ENCODE measurements at regions of chrX and their contacts with region 1.

Region 1: DNA sequence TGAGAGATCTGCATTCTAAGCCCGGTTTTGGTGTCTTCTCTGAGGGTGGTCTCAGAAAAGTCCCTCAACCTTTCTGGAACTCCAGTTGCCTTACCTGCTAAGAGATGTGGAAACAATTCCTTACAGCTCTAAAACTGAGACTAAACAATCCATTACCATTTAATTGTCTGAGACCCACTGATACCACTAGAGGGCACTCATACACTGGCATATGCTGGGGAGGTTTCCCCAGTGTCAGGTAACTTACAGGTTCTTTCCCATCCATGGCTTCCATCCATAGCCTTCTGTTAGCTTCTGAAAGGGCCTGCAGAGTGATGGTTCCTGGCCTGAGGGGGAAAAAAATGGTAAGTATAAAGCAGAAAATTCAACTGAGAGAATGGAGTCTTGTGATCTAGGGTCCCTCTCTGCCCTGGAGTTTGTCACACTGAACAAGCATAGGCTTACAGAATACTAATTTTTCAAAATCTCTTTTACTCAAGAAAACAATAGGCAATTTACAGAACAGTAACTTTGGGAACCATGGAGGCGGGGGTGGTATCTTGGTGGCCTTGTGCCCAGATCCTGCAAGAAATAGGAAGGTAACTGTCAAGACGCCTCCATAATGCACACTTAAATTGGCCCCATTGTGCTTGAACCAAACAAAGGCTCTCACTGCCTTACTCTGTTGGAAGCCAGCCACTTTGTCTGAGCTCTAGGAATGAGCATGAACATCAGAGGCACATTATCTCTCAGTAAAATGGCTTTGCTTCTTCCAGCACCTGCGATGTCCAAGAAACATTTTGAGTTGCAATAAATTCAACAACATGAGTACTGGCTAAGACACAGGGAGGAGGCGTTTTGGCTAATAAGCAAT is 236.1 kb downstream of the OPHN1 start:
- DNase-seq: peak; percentile 37
- H3K4me3 ChIP-seq: no peak overlapping the region
- H3K27ac ChIP-seq: no peak overlapping the region
- H3K4me1 ChIP-seq: no peaks in the 10 kb centered on the region
- CTCF ChIP-seq: peak; percentile 76

Region 2: GRCh38 chrX:68462653-68463052 is 265.5 kb after region 1 on chrX:
- CTCF ChIA-PET with region 1: no interaction called
- POLR2A ChIA-PET with region 1: no interaction called
- intact Hi-C with region 1: loop called (anchors 5 kb)
- DNase-seq: peak; percentile 14
- H3K4me3 ChIP-seq: no peak overlapping the region
- H3K27ac ChIP-seq: no peak overlapping the region
- H3K4me1 ChIP-seq: no peaks in the 10 kb centered on the region
- CTCF ChIP-seq: peak; percentile 59

Region 3: GRCh38 chrX:68634654-68635232 is 437.6 kb after region 1 on chrX:
- CTCF ChIA-PET with region 1: no interaction called
- POLR2A ChIA-PET with region 1: no interaction called
- intact Hi-C with region 1: no loop called
- DNase-seq: no peak
- H3K4me3 ChIP-seq: no peak overlapping the region
- H3K27ac ChIP-seq: no peak overlapping the region
- H3K4me1 ChIP-seq: no peaks in the 10 kb centered on the region
- CTCF ChIP-seq: no peak

Region 4: DNA sequence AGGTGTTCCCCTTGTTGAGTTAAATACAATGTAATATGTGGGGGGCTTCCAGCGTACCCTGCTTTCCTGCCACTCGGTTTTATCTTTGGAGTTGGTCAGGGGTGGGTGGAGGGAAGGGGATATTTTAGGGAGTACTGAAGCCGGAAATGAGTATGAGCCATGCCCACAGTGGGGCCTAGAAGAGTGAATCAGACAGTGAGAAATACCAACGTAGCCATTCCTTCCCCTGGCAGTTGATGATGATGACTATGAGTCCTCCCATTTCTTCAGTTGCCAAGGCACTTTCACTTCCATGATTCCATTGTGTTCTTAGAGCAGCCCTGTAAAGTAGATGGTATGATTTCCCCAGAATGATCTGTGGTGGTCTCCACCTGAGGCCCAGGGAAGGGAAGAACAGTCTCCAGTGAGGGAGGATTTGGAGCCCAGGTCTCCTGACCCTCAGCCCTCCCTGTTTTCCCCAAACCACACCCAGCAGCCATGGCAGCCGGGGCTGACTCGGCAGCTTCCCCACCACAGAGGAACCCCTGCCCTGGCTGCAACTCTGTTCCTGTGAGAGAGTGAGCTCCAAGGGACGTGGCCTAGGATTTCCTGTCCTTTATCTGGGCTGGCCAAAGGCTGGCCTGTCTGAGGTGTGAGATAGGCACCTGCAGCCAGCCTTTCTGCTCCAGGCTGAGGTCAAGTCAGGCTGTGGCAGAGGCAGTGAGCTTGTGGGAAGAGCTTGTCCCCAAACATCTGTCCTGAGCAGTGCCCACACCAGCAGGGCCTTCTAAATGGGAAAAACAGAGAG is 503.0 kb after region 1 on chrX:
- CTCF ChIA-PET with region 1: no interaction called
- POLR2A ChIA-PET with region 1: no interaction called
- intact Hi-C with region 1: loop called (anchors 5 kb)
- DNase-seq: no peak
- H3K4me3 ChIP-seq: no peak overlapping the region
- H3K27ac ChIP-seq: no peak overlapping the region
- H3K4me1 ChIP-seq: no peaks in the 10 kb centered on the region
- CTCF ChIP-seq: no peak

Measured in OCI-LY7 (cell line).